ENCODE measurements at regions of chr5 and their contacts with region 1.

Region 1: DNA sequence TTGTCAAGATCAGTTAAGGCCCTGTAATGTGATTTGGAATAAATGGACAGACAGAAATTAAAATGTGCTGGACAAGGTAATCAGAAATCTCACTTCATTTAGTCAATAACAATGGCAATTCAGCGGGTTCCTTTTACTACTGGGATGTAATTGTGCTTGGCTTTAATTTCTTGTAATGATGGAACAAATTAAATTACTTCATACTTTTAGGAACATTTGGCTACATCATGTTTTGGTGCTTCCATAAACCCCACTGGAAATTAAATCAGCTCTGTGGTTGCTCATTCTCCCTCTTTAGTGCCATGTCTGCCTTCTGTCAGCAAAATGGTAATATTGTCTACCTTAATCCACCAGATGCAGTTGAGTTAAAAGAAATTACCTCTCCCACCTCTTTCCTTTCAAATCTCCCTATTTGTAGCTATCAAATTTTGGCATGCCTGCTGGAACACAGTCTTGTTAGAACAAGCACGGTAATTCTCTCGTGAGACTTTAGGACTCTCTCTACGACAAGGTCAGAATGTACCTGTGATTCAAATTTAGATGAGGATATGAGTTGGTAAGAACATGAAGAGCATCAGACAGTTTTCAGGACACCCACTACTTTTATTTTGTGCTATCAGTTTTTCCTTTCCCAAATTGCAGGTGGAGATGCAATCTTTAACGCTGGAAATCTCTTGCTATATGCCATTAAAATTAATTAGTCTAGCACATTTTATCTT is 476.3 kb downstream of the RAB3C start:
- DNase-seq: no peak
- ATAC-seq: peak in 1 of 4 donors; percentile 38
- H3K4me3 ChIP-seq: no peak overlapping the region
- H3K27ac ChIP-seq: no peak overlapping the region
- H3K4me1 ChIP-seq: peaks cover 0 to 7% (median 0%) of the 10 kb centered on the region in 12 donors
- H3K27me3 ChIP-seq: no peaks in the 10 kb centered on the region
- CTCF ChIP-seq: no peak
- POLR2A ChIP-seq: no peak

Region 2: GRCh38 chr5:57825031-57825683 is 1234.0 kb before region 1 on chr5:
- intact Hi-C with region 1: no loop called
- DNase-seq: no peak
- ATAC-seq: no peak
- H3K4me3 ChIP-seq: no peak overlapping the region
- H3K27ac ChIP-seq: no peak overlapping the region
- H3K4me1 ChIP-seq: no peaks in the 10 kb centered on the region
- H3K27me3 ChIP-seq: no peaks in the 10 kb centered on the region
- CTCF ChIP-seq: no peak
- POLR2A ChIP-seq: no peak

Region 3: DNA sequence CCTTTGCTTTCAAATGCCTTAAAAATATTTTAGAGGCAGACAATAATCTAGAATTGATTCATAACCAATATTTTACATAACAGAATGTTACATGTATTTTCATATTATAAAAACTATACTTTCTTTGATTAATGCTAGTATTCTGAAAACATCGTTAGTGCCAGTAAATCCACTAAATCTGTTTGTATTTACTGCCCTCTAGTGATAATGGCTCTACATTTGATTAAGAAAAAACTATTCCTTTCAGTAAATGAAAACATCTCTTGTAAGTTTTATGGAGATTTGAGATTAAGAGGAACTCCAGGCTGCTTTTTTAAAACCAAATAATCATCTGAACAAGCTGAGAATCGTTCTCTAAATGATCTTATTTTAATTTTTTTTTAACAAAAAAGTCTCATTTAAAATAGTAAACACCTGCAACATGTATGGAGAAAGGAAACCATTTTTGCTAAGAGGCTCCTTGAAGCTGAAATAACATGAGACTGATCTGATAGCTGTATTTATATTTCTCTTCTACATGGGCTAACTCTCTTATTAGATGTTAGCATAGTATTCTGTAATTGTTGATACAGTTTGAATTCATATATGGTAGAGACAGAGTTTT is 51.6 kb before region 1 on chr5:
- intact Hi-C with region 1: loop called in 1 of 10 experiments (anchors 2 kb)
- DNase-seq: no peak
- ATAC-seq: no peak
- H3K4me3 ChIP-seq: no peak overlapping the region
- H3K27ac ChIP-seq: no peak overlapping the region
- H3K4me1 ChIP-seq: peaks cover 0 to 10% (median 0%) of the 10 kb centered on the region in 12 donors
- H3K27me3 ChIP-seq: no peaks in the 10 kb centered on the region
- CTCF ChIP-seq: peak in 11 of 12 donors; percentile 30 to 63 (median 55)
- POLR2A ChIP-seq: no peak

Measured in heart left ventricle (tissue), 16 donors.